ENCODE measurements at regions of chr1 and their contacts with region 1.

Region 1: DNA sequence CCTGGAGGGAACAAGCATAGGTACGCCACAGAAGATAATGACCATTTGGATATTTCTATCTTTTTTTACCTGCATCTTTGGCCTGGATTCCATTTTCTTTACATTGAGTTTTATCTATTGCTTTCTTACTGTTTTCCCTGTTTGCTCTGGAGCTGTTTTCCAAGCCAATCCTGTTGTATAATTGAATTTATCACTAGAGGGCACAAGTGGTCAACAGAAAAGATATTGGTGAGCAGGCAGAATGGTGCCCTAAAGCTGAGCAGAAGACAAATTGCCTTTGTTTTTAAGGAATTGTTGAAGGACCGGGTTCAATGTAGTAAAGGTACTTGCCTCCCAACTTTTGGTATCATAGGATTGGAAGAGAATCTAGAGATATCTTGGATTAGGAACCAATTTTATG is 152.8 kb downstream of the PPP1R12B start:
- DNase-seq: peak; percentile 7
- H3K4me3 ChIP-seq: no peak overlapping the region
- H3K27ac ChIP-seq: no peak overlapping the region
- H3K4me1 ChIP-seq: no peaks in the 10 kb centered on the region
- H3K27me3 ChIP-seq: no peaks in the 10 kb centered on the region
- CTCF ChIP-seq: peak in 3 of 4 experiments; percentile 32 to 75 (median 67)
- POLR2A ChIP-seq: no peak

Region 2: GRCh38 chr1:202576816-202577215 is 75.5 kb after region 1 on chr1:
- intact Hi-C with region 1: loop called (anchors 5 kb)
- DNase-seq: peak; percentile 41
- H3K4me3 ChIP-seq: no peak overlapping the region
- H3K27ac ChIP-seq: peak overlapping the region; percentile 34 to 57
- H3K4me1 ChIP-seq: no peaks in the 10 kb centered on the region
- H3K27me3 ChIP-seq: no peaks in the 10 kb centered on the region
- CTCF ChIP-seq: no peak
- POLR2A ChIP-seq: no peak

Region 3: DNA sequence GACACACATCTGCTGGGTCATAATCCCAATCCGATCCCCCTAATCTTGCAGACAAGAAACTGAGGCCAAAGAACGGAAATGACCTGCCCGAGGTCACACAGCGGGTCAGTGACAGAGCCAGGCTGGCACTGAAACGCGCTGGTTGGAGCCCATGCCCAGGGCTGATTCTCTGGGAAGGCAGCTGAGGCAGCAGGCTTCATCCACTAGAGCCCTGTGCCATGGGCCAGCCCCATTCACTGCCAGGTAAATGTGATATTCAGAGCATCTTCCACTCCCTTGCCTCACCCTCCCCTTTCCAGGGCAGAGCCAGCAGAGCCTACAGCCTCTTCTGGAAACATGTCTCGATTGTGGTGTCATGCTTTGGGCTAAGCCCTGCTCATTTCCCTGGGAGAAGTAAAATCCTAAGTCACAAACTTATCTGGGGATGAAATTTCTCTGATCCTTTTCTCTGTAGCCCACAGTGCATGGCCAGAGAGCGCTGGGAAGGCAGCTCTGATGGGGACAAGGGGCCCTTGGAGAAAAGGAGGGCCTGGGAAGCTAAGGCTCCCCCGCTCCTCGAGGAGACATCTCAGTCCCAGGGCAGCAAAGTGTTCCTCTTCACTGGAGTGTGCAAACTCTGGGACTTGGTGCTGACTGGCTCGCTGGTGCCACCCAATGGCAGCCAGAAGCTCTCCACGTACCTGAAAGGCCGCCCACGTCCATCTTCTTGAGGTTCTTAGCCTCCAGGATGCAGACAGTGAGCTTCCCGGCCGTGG is 98.6 kb after region 1 on chr1:
- intact Hi-C with region 1: loop called (anchors 5 kb)
- DNase-seq: peak; percentile 42
- H3K4me3 ChIP-seq: no peak overlapping the region
- H3K27ac ChIP-seq: peak overlapping the region; percentile 19 to 39
- H3K4me1 ChIP-seq: no peaks in the 10 kb centered on the region
- H3K27me3 ChIP-seq: no peaks in the 10 kb centered on the region
- CTCF ChIP-seq: peak; percentile 41 to 78 (median 62)
- POLR2A ChIP-seq: no peak

Region 4: GRCh38 chr1:202615501-202616354 is 114.4 kb after region 1 on chr1:
- intact Hi-C with region 1: loop called (anchors 5 kb)
- DNase-seq: no peak
- H3K4me3 ChIP-seq: no peak overlapping the region
- H3K27ac ChIP-seq: no peak overlapping the region
- H3K4me1 ChIP-seq: no peaks in the 10 kb centered on the region
- H3K27me3 ChIP-seq: no peaks in the 10 kb centered on the region
- CTCF ChIP-seq: no peak
- POLR2A ChIP-seq: no peak